GM12878 (cell line): ENCODE measurements at regions of chr4 and their contacts with region 1.

Region 1: GRCh38 chr4:40840985-40841571 is 91.3 kb downstream of the NSUN7 start:
- DNase-seq: peak; percentile 64
- ATAC-seq: peak; percentile 86
- H3K4me3 ChIP-seq: no peak overlapping the region
- H3K27ac ChIP-seq: peak overlapping the region; percentile 39
- H3K4me1 ChIP-seq: peaks cover 15% of the 10 kb centered on the region
- H3K27me3 ChIP-seq: no peaks in the 10 kb centered on the region
- CTCF ChIP-seq: peak; percentile 67 to 87 (median 78)
- EP300 ChIP-seq: no peak
- POLR2A ChIP-seq: no peak
- RAD21 ChIP-seq: peak; percentile 41

Region 2: GRCh38 chr4:40613456-40613855 is 227.6 kb before region 1 on chr4:
- CTCF ChIA-PET with region 1: no interaction called
- POLR2A ChIA-PET with region 1: no interaction called
- RAD21 ChIA-PET with region 1: no interaction called
- SMC1A ChIA-PET with region 1: no interaction called
- in situ Hi-C with region 1: no loop called
- intact Hi-C with region 1: no loop called
- DNase-seq: no peak
- ATAC-seq: no peak
- H3K4me3 ChIP-seq: no peak overlapping the region
- H3K27ac ChIP-seq: no peak overlapping the region
- H3K4me1 ChIP-seq: peaks cover 16% of the 10 kb centered on the region
- H3K27me3 ChIP-seq: no peaks in the 10 kb centered on the region
- CTCF ChIP-seq: no peak
- EP300 ChIP-seq: no peak
- POLR2A ChIP-seq: no peak
- RAD21 ChIP-seq: no peak

Region 3: GRCh38 chr4:40731792-40732245 is 109.3 kb before region 1 on chr4:
- CTCF ChIA-PET with region 1: interaction called, 224 read pairs
- POLR2A ChIA-PET with region 1: no interaction called
- RAD21 ChIA-PET with region 1: interaction called, 15 read pairs
- SMC1A ChIA-PET with region 1: interaction called, 133 read pairs
- in situ Hi-C with region 1: loop called (anchors 5 kb)
- intact Hi-C with region 1: loop called (anchors 1 kb)
- DNase-seq: no peak
- ATAC-seq: peak; percentile 24; the same call in 2 of the 3 replicates
- H3K4me3 ChIP-seq: no peak overlapping the region
- H3K27ac ChIP-seq: no peak overlapping the region
- H3K4me1 ChIP-seq: 0 out of 2 replicates have a peak, but pooled peaks cover 3% of the 10 kb centered on the region
- H3K27me3 ChIP-seq: no peaks in the 10 kb centered on the region
- CTCF ChIP-seq: no peak
- EP300 ChIP-seq: no peak
- POLR2A ChIP-seq: no peak
- RAD21 ChIP-seq: no peak

Region 4: GRCh38 chr4:40736910-40737309 is 104.2 kb before region 1 on chr4:
- CTCF ChIA-PET with region 1: interaction called, 224 read pairs
- POLR2A ChIA-PET with region 1: no interaction called
- RAD21 ChIA-PET with region 1: interaction called, 15 read pairs
- SMC1A ChIA-PET with region 1: interaction called, 133 read pairs
- in situ Hi-C with region 1: loop called (anchors 5 kb)
- intact Hi-C with region 1: loop called (anchors 1 kb)
- DNase-seq: no peak
- ATAC-seq: peak; percentile 84
- H3K4me3 ChIP-seq: no peak overlapping the region
- H3K27ac ChIP-seq: no peak overlapping the region
- H3K4me1 ChIP-seq: no peaks in the 10 kb centered on the region
- H3K27me3 ChIP-seq: no peaks in the 10 kb centered on the region
- CTCF ChIP-seq: peak; percentile 43 to 68 (median 47); a peak in 5 of 6 replicates
- EP300 ChIP-seq: no peak
- POLR2A ChIP-seq: no peak
- RAD21 ChIP-seq: peak; percentile 94

Region 5: GRCh38 chr4:40782876-40783275 is 58.2 kb before region 1 on chr4:
- CTCF ChIA-PET with region 1: interaction called, 13 read pairs
- POLR2A ChIA-PET with region 1: no interaction called
- RAD21 ChIA-PET with region 1: no interaction called
- SMC1A ChIA-PET with region 1: interaction called, 7 read pairs
- in situ Hi-C with region 1: no loop called
- intact Hi-C with region 1: no loop called
- DNase-seq: no peak
- ATAC-seq: no peak
- H3K4me3 ChIP-seq: no peak overlapping the region
- H3K27ac ChIP-seq: no peak overlapping the region
- H3K4me1 ChIP-seq: no peaks in the 10 kb centered on the region
- H3K27me3 ChIP-seq: no peaks in the 10 kb centered on the region
- CTCF ChIP-seq: no peak
- EP300 ChIP-seq: no peak
- POLR2A ChIP-seq: no peak
- RAD21 ChIP-seq: no peak

Region 6: GRCh38 chr4:40800064-40800463 is 41.0 kb before region 1 on chr4:
- CTCF ChIA-PET with region 1: interaction called, 12 read pairs
- POLR2A ChIA-PET with region 1: no interaction called
- RAD21 ChIA-PET with region 1: interaction called, 3 read pairs
- SMC1A ChIA-PET with region 1: interaction called, 3 read pairs
- in situ Hi-C with region 1: no loop called
- intact Hi-C with region 1: no loop called
- DNase-seq: peak; percentile 41
- ATAC-seq: peak; percentile 96
- H3K4me3 ChIP-seq: no peak overlapping the region
- H3K27ac ChIP-seq: no peak overlapping the region; the same call in 1 of the 2 replicates
- H3K4me1 ChIP-seq: peaks cover 3% of the 10 kb centered on the region; the same call in 1 of the 2 replicates
- H3K27me3 ChIP-seq: no peaks in the 10 kb centered on the region
- CTCF ChIP-seq: no peak
- EP300 ChIP-seq: peak in 1 of 2 experiments; percentile 51; a peak in 1 of 4 replicates
- POLR2A ChIP-seq: no peak
- RAD21 ChIP-seq: no peak

Region 7: GRCh38 chr4:40811956-40812355 is 29.1 kb before region 1 on chr4:
- CTCF ChIA-PET with region 1: interaction called, 14 read pairs
- POLR2A ChIA-PET with region 1: no interaction called
- RAD21 ChIA-PET with region 1: no interaction called
- SMC1A ChIA-PET with region 1: interaction called, 3 read pairs
- in situ Hi-C with region 1: no loop called
- intact Hi-C with region 1: no loop called
- DNase-seq: no peak
- ATAC-seq: no peak
- H3K4me3 ChIP-seq: no peak overlapping the region
- H3K27ac ChIP-seq: no peak overlapping the region
- H3K4me1 ChIP-seq: no peaks in the 10 kb centered on the region
- H3K27me3 ChIP-seq: no peaks in the 10 kb centered on the region
- CTCF ChIP-seq: no peak
- EP300 ChIP-seq: no peak
- POLR2A ChIP-seq: no peak
- RAD21 ChIP-seq: no peak

Region 8: DNA sequence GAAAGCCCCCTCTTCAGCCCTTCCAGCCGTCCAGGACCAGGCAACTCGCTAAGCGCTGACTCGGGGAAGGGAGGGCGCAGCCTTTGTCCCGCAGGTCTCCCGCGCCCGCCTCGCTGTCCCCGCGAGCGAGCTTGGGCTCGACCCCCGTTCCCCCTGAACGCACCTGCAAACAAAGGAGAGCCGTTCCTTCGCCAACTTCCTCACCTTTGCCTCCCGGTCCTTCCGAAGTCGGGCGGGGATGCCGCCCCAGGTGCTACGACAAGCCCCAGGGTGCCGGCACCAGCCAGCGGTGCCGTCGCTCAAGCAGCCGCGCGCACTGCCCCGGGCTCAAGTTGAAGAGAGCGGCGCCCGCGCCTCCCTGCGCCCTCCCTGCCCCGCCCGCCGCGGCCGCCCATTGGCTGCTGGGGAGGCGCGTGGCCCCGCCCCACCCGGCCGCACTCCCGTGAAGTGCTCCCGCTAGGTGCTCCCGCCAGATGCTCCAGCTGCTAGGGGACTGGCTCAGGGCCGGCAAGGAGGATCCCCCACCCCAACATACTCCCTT is 15.8 kb after region 1 on chr4:
- CTCF ChIA-PET with region 1: interaction called, 18 read pairs
- POLR2A ChIA-PET with region 1: no interaction called
- RAD21 ChIA-PET with region 1: no interaction called
- SMC1A ChIA-PET with region 1: no interaction called
- in situ Hi-C with region 1: no loop called
- intact Hi-C with region 1: no loop called
- DNase-seq: no peak
- ATAC-seq: peak; percentile 96
- H3K4me3 ChIP-seq: peak overlapping the region; percentile 62
- H3K27ac ChIP-seq: no peak overlapping the region
- H3K4me1 ChIP-seq: peaks cover 16% of the 10 kb centered on the region
- H3K27me3 ChIP-seq: no peaks in the 10 kb centered on the region
- CTCF ChIP-seq: no peak
- EP300 ChIP-seq: no peak
- POLR2A ChIP-seq: peak; percentile 62; the same call in 1 of the 2 replicates
- RAD21 ChIP-seq: no peak

Region 9: GRCh38 chr4:41024556-41025491 is 183.7 kb after region 1 on chr4:
- CTCF ChIA-PET with region 1: no interaction called
- POLR2A ChIA-PET with region 1: no interaction called
- RAD21 ChIA-PET with region 1: no interaction called
- SMC1A ChIA-PET with region 1: no interaction called
- in situ Hi-C with region 1: no loop called
- intact Hi-C with region 1: no loop called
- DNase-seq: no peak
- ATAC-seq: no peak
- H3K4me3 ChIP-seq: no peak overlapping the region
- H3K27ac ChIP-seq: no peak overlapping the region
- H3K4me1 ChIP-seq: no peaks in the 10 kb centered on the region
- H3K27me3 ChIP-seq: no peaks in the 10 kb centered on the region
- CTCF ChIP-seq: no peak
- EP300 ChIP-seq: no peak
- POLR2A ChIP-seq: no peak
- RAD21 ChIP-seq: no peak

Region 10: GRCh38 chr4:41095973-41096372 is 254.9 kb after region 1 on chr4:
- CTCF ChIA-PET with region 1: no interaction called
- POLR2A ChIA-PET with region 1: no interaction called
- RAD21 ChIA-PET with region 1: no interaction called
- SMC1A ChIA-PET with region 1: no interaction called
- in situ Hi-C with region 1: no loop called
- intact Hi-C with region 1: no loop called
- DNase-seq: peak; percentile 54
- ATAC-seq: peak; percentile 60
- H3K4me3 ChIP-seq: no peak overlapping the region
- H3K27ac ChIP-seq: peak overlapping the region; percentile 23; the same call in 1 of the 2 replicates
- H3K4me1 ChIP-seq: peaks cover 6% of the 10 kb centered on the region; the same call in 1 of the 2 replicates
- H3K27me3 ChIP-seq: no peaks in the 10 kb centered on the region
- CTCF ChIP-seq: no peak
- EP300 ChIP-seq: no peak
- POLR2A ChIP-seq: no peak
- RAD21 ChIP-seq: no peak